Uterus (tissue), 4 donors: ENCODE measurements at regions of chr9 and their contacts with region 1.

Region 1: GRCh38 chr9:21340735-21341134 is 5.5 kb upstream of the KLHL9 start:
- DNase-seq: no peak
- H3K4me3 ChIP-seq: no peak overlapping the region
- H3K27ac ChIP-seq: no peak overlapping the region
- H3K4me1 ChIP-seq: peaks cover 0 to 5% of the 10 kb centered on the region in 2 donors
- H3K27me3 ChIP-seq: no peaks in the 10 kb centered on the region
- CTCF ChIP-seq: no peak
- POLR2A ChIP-seq: no peak

Region 2: DNA sequence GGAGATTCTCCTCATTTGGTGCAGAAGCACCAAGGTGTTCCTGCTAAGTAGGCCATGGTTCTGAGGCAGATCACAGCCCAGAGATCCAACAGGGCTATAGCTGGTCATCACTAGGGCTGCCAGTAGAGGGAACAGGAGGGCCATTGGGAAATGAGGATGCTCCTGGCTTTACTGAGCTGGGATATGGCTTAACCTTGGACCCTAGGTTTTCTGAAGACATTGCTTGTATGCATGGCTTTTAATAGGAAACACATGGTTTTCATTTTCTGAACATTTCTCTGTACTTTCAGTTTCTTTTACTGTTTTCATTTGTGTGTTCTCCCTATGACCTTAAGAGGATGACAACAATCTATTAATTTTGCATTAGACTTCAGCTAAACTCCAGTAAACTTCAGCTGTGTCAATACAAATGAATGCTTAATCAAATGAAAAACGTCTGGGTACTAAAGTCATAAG is 199.3 kb before region 1 on chr9 and contains the start of gene IFNW1:
- intact Hi-C with region 1: no loop called
- DNase-seq: no peak
- H3K4me3 ChIP-seq: no peak within 1 kb of the TSS
- H3K27ac ChIP-seq: no peak within 1 kb of the TSS
- H3K4me1 ChIP-seq: no peaks in the 10 kb centered on the region
- H3K27me3 ChIP-seq: no peaks in the 10 kb centered on the region
- CTCF ChIP-seq: no peak
- POLR2A ChIP-seq: no peak
- total RNA-seq, gene IFNW1: not detected

Region 3: GRCh38 chr9:21513431-21513830 is 172.7 kb after region 1 on chr9:
- intact Hi-C with region 1: no loop called
- DNase-seq: no peak
- H3K4me3 ChIP-seq: no peak overlapping the region
- H3K27ac ChIP-seq: no peak overlapping the region
- H3K4me1 ChIP-seq: no peaks in the 10 kb centered on the region
- H3K27me3 ChIP-seq: no peaks in the 10 kb centered on the region
- CTCF ChIP-seq: no peak
- POLR2A ChIP-seq: no peak

Region 4: DNA sequence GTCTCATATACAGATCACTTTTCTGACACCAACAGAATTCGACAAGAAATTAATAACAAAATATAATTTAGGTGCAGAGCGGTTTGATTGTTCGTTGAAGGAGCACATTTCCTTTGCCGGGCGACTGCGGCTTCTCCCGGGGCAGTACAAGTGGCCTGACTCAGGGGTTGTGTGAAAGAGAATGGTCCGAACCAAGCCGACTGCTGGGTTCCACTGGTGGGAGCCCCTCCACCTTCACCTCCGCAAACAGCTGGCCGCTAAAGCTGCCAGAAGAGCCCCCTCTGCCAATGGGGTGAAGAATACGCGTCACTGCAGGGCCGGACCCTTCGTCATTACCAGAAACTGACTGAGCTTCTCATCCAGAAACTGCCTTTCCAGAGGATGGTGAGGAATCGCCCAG is 297.4 kb after region 1 on chr9:
- intact Hi-C with region 1: no loop called
- DNase-seq: no peak
- H3K4me3 ChIP-seq: no peak overlapping the region
- H3K27ac ChIP-seq: no peak overlapping the region
- H3K4me1 ChIP-seq: no peaks in the 10 kb centered on the region
- H3K27me3 ChIP-seq: no peaks in the 10 kb centered on the region
- CTCF ChIP-seq: no peak
- POLR2A ChIP-seq: no peak

Region 5: GRCh38 chr9:21789541-21790037 is 448.9 kb after region 1 on chr9:
- intact Hi-C with region 1: loop called (anchors 10 kb)
- DNase-seq: peak; percentile 29 to 57
- H3K4me3 ChIP-seq: peak overlapping the region in 1 of 2 donors; percentile 16
- H3K27ac ChIP-seq: no peak overlapping the region
- H3K4me1 ChIP-seq: no peaks in the 10 kb centered on the region
- H3K27me3 ChIP-seq: no peaks in the 10 kb centered on the region
- CTCF ChIP-seq: peak; percentile 73 to 81 (median 76)
- POLR2A ChIP-seq: no peak